GM23248 (cell line): ENCODE measurements at regions of chr4 and their contacts with region 1.

Region 1: DNA sequence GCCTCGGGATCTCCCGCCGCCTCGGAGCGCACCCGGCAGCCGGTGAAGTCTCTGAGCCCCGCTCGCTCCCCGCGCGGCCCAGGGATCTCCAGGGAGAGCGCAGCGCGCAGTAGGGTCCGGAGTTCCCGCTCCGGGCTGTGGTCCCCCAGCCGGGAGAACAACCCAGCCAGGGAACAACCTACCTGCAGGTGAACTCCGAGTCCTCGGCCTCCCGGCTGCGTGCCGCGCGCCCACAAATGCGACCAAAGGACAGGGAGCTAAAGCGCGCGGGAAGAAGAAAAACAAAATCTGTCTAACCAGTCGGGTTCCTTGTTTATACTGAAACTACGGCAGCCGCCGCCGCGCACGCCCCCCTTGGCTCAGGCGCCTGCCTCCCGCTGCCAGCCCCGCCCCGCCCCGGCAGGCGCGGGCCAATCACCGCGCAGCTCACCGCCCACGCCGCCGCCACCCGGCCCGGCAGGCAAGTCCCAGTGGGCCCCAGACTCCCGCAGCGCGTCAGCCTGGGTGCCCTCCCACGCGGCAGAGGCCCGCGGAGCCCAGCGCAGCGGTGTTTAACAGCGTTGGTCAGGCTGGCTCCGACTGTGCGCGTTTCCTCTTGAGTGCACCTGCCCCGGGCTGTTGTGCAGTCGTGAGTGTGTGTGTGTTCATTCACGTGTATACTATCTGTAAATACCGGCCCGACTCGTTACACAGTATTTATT is at the start of gene RASGEF1B:
- DNase-seq: peak; percentile 87
- H3K4me3 ChIP-seq: peak within 1 kb of the TSS; percentile 78
- H3K27ac ChIP-seq: no peak within 1 kb of the TSS
- H3K4me1 ChIP-seq: peaks cover 9% of the 10 kb centered on the region; the same call in 1 of the 2 replicates
- H3K27me3 ChIP-seq: peaks cover 37% of the 10 kb centered on the region
- total RNA-seq, gene RASGEF1B: not detected in 2 replicates

Region 2: GRCh38 chr4:80897537-80898303 is 574.0 kb before region 1 on chr4:
- in situ Hi-C with region 1: no loop called
- DNase-seq: no peak
- H3K4me3 ChIP-seq: no peak overlapping the region
- H3K27ac ChIP-seq: no peak overlapping the region
- H3K4me1 ChIP-seq: no peaks in the 10 kb centered on the region
- H3K27me3 ChIP-seq: no peaks in the 10 kb centered on the region

Region 3: DNA sequence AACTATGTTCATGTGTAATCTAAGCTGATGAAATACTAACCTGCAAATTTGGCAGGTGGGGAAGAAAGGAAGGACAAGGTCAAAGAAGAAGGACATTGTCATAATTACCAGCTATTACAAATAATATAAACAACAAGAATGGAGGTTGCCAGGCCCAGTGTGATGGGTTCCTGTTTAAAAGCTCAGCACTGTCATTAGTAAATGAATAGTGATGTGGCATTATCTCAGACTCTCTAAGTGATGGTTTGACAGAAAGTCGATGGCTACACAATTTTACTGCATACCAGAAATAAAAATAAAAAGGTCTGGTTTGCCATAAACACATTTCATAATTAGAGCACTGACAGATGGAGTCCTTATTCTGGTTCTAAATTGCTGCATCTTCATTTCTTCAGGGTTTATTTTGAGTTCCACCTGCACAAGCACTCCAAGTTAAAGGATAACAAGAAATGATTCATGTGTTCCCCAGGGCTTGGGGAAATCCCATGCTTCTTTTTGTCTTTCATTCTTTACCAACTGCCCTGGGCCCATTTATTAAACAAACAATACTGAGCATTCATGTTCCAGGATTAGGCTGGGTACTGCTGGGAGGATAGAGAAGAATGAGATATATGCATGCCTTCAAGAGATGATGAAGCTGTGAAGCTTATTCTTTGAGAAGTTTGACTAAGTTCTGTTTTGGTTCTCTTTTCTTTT is 367.8 kb after region 1 on chr4:
- in situ Hi-C with region 1: loop called (anchors 10 kb)
- DNase-seq: no peak
- H3K4me3 ChIP-seq: no peak overlapping the region
- H3K27ac ChIP-seq: no peak overlapping the region
- H3K4me1 ChIP-seq: no peaks in the 10 kb centered on the region
- H3K27me3 ChIP-seq: no peaks in the 10 kb centered on the region

Region 4: DNA sequence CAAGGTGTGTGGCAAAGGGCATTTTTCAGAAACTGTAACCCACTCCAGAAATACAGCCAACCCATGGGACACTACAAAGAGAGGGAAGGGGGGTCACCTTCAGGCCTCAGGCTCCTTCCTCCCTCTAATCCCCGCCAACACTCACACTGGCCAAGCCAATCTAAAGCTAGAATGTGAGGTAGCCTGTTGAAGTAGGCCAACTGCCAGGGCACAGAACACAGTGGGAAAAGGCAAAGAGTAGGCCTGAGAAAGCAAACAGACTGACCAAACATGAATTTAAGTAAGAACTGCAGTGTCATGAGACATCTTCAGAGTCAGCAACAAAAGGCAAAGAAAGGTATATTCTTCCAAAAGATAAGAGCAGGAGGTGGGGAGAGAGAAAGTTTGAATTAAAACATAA is 613.0 kb after region 1 on chr4:
- in situ Hi-C with region 1: no loop called
- DNase-seq: no peak
- H3K4me3 ChIP-seq: no peak overlapping the region
- H3K27ac ChIP-seq: no peak overlapping the region
- H3K4me1 ChIP-seq: no peaks in the 10 kb centered on the region
- H3K27me3 ChIP-seq: no peaks in the 10 kb centered on the region

Region 5: GRCh38 chr4:82201805-82202641 is 730.3 kb after region 1 on chr4:
- in situ Hi-C with region 1: loop called (anchors 25 kb)
- DNase-seq: peak; percentile 60
- H3K4me3 ChIP-seq: no peak overlapping the region
- H3K27ac ChIP-seq: no peak overlapping the region
- H3K4me1 ChIP-seq: no peaks in the 10 kb centered on the region
- H3K27me3 ChIP-seq: no peaks in the 10 kb centered on the region; the same call in 1 of the 2 replicates